Adrenal gland (tissue), 19 donors: ENCODE measurements at regions of chr17 and their contacts with region 1.

Region 1: DNA sequence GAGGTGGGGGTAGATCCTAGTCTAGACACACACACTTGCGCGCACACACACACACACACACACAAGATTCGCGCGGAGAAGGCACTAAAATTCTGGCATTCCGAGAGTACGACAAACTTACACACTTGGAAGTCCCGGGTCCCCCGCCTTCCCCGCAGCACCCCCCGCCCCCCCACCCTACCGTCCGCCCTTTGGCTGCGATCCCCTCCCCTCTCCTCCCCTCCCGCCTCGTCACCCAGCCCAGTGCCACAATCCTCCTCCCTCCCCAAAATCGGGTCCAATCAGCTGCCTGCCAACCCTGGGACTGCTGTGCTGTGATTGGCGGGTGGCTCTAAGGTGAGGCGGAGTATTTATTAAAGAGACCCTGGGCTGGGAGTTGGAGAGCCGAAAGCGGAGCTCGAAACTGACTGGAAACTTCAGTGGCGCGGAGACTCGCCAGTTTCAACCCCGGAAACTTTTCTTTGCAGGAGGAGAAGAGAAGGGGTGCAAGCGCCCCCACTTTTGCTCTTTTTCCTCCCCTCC is at the start of gene SOX9:
- DNase-seq: peak; percentile 67 to 88 (median 82)
- H3K4me3 ChIP-seq: peak within 1 kb of the TSS in 2 of 4 donors; percentile 15 to 59
- H3K27ac ChIP-seq: peak within 1 kb of the TSS in 2 of 5 donors; percentile 38 to 78
- H3K4me1 ChIP-seq: peaks cover 4 to 28% of the 10 kb centered on the region in 2 donors
- H3K27me3 ChIP-seq: peaks cover 59% of the 10 kb centered on the region
- CTCF ChIP-seq: no peak
- POLR2A ChIP-seq: peak; percentile 56 to 65
- total RNA-seq, gene SOX9: 0.22 to 8.9 (median 5.4) TPM

Region 2: DNA sequence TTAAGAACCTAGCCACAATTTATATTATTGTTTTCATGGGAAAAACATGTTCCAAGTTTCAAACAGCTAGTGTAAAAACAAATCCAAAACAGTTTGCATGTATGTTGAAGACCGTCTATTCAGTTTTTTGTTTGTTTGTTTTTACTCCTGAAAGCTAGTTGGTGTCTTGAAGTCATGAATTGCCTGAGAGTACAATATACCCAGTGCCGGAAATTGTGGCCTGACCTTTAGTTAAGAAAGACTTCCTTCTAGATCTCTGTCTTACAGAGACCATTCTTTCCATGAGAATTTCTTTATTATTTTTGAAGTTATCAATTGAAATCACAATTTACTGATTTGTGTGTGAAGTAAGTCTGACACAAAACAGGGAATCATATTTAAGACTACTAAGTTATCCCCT is 1476.6 kb before region 1 on chr17:
- intact Hi-C with region 1: loop called in 1 of 2 experiments (anchors 10 kb)
- DNase-seq: no peak
- H3K4me3 ChIP-seq: no peak overlapping the region
- H3K27ac ChIP-seq: no peak overlapping the region
- H3K4me1 ChIP-seq: no peaks in the 10 kb centered on the region
- H3K27me3 ChIP-seq: peaks cover 4% of the 10 kb centered on the region
- CTCF ChIP-seq: no peak
- POLR2A ChIP-seq: no peak

Region 3: DNA sequence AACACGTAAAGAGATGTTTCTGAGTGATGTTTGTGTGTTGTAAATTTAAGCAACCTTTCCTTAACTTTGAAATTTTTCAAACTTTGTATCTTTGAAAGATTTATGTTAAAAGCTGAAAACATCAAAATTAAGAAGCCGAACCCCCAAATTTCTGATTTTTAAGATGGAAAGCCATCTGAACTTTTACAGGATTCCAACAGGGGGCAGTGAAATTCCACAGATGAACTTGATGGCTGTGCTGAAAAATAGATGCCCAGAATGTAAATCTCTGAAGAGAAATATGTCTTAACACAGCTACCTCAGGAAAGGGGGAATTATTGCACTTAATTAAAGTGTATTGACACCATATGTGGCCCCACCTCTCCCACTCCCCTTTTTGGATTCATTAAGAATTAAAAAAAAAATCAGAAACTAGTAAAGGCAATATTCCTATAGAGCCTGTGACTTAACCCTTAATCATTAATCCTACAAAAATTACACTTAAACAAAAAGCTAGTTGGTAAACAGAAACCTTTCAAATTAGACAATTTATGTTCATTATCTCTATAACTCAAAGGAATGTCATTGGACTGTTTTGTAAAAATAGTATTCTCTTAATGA is 1353.5 kb before region 1 on chr17:
- intact Hi-C with region 1: loop called in 1 of 2 experiments (anchors 10 kb)
- DNase-seq: no peak
- H3K4me3 ChIP-seq: no peak overlapping the region
- H3K27ac ChIP-seq: no peak overlapping the region
- H3K4me1 ChIP-seq: no peaks in the 10 kb centered on the region
- H3K27me3 ChIP-seq: no peaks in the 10 kb centered on the region
- CTCF ChIP-seq: peak; percentile 51 to 68 (median 62)
- POLR2A ChIP-seq: no peak

Region 4: GRCh38 chr17:71472809-71473789 is 647.6 kb before region 1 on chr17:
- intact Hi-C with region 1: loop called in 1 of 2 experiments (anchors 5 kb)
- DNase-seq: peak in 4 of 7 donors; percentile 13 to 20 (median 16)
- H3K4me3 ChIP-seq: no peak overlapping the region
- H3K27ac ChIP-seq: no peak overlapping the region
- H3K4me1 ChIP-seq: no peaks in the 10 kb centered on the region
- H3K27me3 ChIP-seq: peaks cover 4% of the 10 kb centered on the region
- CTCF ChIP-seq: peak; percentile 32 to 60 (median 46)
- POLR2A ChIP-seq: no peak

Region 5: GRCh38 chr17:72187556-72187955 is 66.9 kb after region 1 on chr17:
- intact Hi-C with region 1: no loop called
- DNase-seq: peak in 5 of 7 donors; percentile 13 to 57 (median 27)
- H3K4me3 ChIP-seq: no peak overlapping the region
- H3K27ac ChIP-seq: no peak overlapping the region
- H3K4me1 ChIP-seq: no peaks in the 10 kb centered on the region
- H3K27me3 ChIP-seq: no peaks in the 10 kb centered on the region
- CTCF ChIP-seq: no peak
- POLR2A ChIP-seq: no peak

Region 6: GRCh38 chr17:72539981-72540897 is 419.5 kb after region 1 on chr17:
- intact Hi-C with region 1: loop called in 1 of 2 experiments (anchors 10 kb)
- DNase-seq: peak; percentile 36 to 79 (median 56)
- H3K4me3 ChIP-seq: no peak overlapping the region
- H3K27ac ChIP-seq: no peak overlapping the region
- H3K4me1 ChIP-seq: no peaks in the 10 kb centered on the region
- H3K27me3 ChIP-seq: no peaks in the 10 kb centered on the region
- CTCF ChIP-seq: peak; percentile 55 to 99 (median 80)
- POLR2A ChIP-seq: no peak